ENCODE measurements at regions of chr6 and their contacts with region 1.

Region 1: DNA sequence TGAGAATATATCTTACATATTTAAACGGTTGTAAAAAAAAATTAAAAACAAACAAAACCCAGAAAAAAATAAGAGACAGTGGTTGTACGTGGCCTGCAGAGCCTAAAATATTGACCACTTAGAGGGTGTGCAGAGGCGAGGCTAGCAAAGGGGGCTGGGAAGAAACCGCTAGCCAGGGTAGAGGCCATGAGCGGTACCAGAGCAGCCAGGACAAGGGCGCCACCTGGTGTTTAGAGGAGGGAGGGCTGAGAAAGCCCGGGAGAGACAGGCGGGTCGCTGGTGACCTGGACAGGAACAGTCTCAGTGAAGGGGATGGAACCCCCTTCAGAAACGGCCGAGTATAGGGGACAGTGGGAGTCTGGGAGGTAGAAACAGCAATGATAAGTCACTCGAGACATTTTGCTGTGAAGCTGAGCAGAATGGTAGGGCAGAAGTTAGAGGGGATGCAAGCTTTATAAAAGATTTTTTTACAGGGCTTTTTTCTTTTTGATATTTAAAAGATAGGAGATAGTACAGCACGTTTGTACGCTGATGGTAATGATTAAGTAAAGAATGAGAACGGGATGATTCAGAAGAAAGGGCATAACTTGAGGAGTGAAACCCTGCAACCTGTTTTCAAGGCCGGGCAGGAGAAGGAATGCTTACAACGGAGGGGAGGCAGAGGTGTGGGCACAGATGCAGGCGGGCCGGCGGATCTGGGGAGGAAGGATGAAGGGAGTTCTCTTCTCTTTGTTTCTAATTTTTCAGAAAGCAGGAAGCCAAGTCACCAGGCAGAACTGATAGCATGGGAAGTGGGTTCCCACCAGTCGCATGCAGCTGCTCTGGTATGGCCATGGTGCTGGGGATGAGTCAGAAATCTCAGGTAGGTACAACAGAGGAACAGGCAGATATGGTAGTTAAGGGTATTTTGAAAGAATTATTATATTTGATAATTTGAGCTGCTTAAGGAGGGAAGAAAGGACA is 76.2 kb downstream of the FAM229B start:
- DNase-seq: peak; percentile 33
- ATAC-seq: peak; percentile 100
- H3K4me3 ChIP-seq: no peak overlapping the region
- H3K27ac ChIP-seq: no peak overlapping the region
- H3K4me1 ChIP-seq: 0 out of 4 replicates have a peak, but pooled peaks cover 0 to 5% of the 10 kb centered on the region in 2 experiments
- H3K27me3 ChIP-seq: no peaks in the 10 kb centered on the region
- CTCF ChIP-seq: peak; percentile 83 to 97 (median 93)
- POLR2A ChIP-seq: no peak
- RAD21 ChIP-seq: peak; percentile 93

Region 2: GRCh38 chr6:111503207-111503606 is 660.4 kb before region 1 on chr6:
- CTCF ChIA-PET with region 1: no interaction called
- POLR2A ChIA-PET with region 1: no interaction called
- RAD21 ChIA-PET with region 1: no interaction called
- intact Hi-C with region 1: no loop called
- DNase-seq: no peak
- ATAC-seq: no peak
- H3K4me3 ChIP-seq: no peak overlapping the region
- H3K27ac ChIP-seq: no peak overlapping the region
- H3K4me1 ChIP-seq: no peaks in the 10 kb centered on the region
- H3K27me3 ChIP-seq: no peaks in the 10 kb centered on the region
- CTCF ChIP-seq: no peak
- POLR2A ChIP-seq: no peak
- RAD21 ChIP-seq: no peak

Region 3: DNA sequence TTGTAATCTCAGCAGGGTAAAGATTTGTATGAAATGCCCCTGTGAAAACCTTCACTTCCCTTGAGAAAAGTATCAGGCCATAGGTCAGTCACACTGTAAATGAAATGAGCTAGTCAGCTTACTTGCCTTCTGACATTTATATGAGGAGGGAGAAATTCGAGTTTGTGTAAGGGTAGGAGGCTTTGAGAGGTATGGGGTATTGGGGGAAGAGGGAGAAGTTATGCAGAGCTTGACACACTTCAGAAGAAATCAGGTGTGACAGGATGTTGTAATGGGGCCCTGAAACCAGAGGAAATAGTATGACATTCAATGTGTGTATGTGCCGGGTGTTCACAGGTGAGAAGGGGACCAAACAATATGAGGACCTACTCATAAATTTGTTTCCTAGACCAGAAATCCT is 173.8 kb before region 1 on chr6:
- CTCF ChIA-PET with region 1: no interaction called
- POLR2A ChIA-PET with region 1: no interaction called
- RAD21 ChIA-PET with region 1: no interaction called
- intact Hi-C with region 1: no loop called
- DNase-seq: no peak
- ATAC-seq: no peak
- H3K4me3 ChIP-seq: no peak overlapping the region
- H3K27ac ChIP-seq: no peak overlapping the region
- H3K4me1 ChIP-seq: peaks cover 19 to 36% of the 10 kb centered on the region in 2 experiments
- H3K27me3 ChIP-seq: no peaks in the 10 kb centered on the region
- CTCF ChIP-seq: no peak
- POLR2A ChIP-seq: no peak
- RAD21 ChIP-seq: no peak

Region 4: DNA sequence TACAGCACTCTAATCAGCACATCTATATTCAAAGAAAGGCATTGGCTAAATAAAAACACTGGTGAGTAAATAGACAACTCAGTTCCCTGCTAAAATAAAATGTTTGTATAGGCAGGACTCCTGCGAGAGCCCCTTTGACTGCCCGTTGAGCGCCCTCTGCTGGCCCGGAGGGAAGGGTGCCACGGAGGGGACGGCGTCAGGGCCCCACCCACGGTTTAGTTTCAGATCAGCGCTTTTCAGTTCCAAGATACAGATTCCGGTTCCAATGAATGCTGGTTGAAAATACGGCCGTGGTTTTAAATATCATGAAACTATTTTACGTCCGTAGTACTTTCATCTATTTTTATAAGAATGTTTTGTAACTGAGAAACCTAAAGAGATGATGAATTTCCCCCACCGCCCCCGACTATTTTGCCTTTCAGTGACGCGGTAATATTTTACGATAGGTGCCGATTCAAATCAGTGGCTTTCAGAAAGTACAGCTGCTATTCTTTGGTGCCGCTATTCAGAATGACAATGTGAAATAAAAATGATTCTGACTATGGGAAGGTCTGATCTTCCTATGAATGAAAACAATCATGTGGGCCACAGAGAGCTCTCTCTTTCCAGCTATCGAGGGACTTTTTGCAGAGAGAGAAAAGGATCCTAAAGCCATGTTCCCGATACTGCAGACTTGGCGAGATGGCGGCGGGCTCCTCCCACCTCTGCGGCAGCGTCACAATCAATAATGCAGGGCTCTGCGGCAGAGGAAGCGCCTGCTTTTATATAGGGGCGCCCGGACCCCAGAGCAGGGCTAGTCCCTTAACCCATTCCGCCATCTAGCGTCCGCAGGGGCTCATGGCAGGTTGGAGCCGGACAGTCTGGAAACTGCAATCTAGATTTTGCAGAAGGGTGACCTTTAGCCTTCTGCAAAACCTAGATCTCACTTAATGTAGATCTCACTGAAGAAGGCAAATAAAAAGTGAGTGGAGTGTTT is 120.3 kb before region 1 on chr6:
- CTCF ChIA-PET with region 1: interaction called, 4 read pairs
- POLR2A ChIA-PET with region 1: no interaction called
- RAD21 ChIA-PET with region 1: no interaction called
- intact Hi-C with region 1: loop called (anchors 1 kb)
- DNase-seq: peak; percentile 82
- ATAC-seq: peak; percentile 95
- H3K4me3 ChIP-seq: peak overlapping the region; percentile 61 to 72
- H3K27ac ChIP-seq: peak overlapping the region; percentile 44; the same call in 1 of the 2 replicates
- H3K4me1 ChIP-seq: 0 out of 4 replicates have a peak, but pooled peaks cover 0 to 4% of the 10 kb centered on the region in 2 experiments
- H3K27me3 ChIP-seq: no peaks in the 10 kb centered on the region
- CTCF ChIP-seq: peak; percentile 94 to 98 (median 96)
- POLR2A ChIP-seq: peak; percentile 23
- RAD21 ChIP-seq: peak; percentile 98

Region 5: GRCh38 chr6:112087136-112087911 is 76.3 kb before region 1 on chr6 and contains the starts of genes FAM229B and TUBE1:
- CTCF ChIA-PET with region 1: interaction called, 10 read pairs
- POLR2A ChIA-PET with region 1: no interaction called
- RAD21 ChIA-PET with region 1: interaction called in 1 of 2 experiments, 3 read pairs
- intact Hi-C with region 1: loop called (anchors 1 kb)
- DNase-seq: peak; percentile 93
- ATAC-seq: peak; percentile 92
- H3K4me3 ChIP-seq: peak within 1 kb of the TSS; percentile 78 to 95
- H3K27ac ChIP-seq: peak within 1 kb of the TSS; percentile 53
- H3K4me1 ChIP-seq: peaks cover 2 to 9% of the 10 kb centered on the region in 2 experiments; a peak in 3 of 4 replicates
- H3K27me3 ChIP-seq: no peaks in the 10 kb centered on the region
- CTCF ChIP-seq: no peak
- POLR2A ChIP-seq: peak; percentile 88
- RAD21 ChIP-seq: no peak
- total RNA-seq, gene FAM229B: 11.4 TPM
- total RNA-seq, gene TUBE1: 42.5 TPM